CD8-positive, alpha-beta T cell (primary cell): ENCODE measurements at regions of chr10 and their contacts with region 1.

Region 1: GRCh38 chr10:14543046-14543903 is 212.6 kb upstream of the FRMD4A start:
- DNase-seq: peak in 6 of 9 experiments; percentile 47 to 82 (median 66)
- ATAC-seq: peak; percentile 84
- H3K4me3 ChIP-seq: peak overlapping the region; percentile 4 to 35
- H3K4me3 Mint-ChIP-seq: peak overlapping the region; percentile 75
- H3K27ac ChIP-seq: peak overlapping the region; percentile 68
- H3K27ac Mint-ChIP-seq: peak overlapping the region; percentile 95
- H3K4me1 ChIP-seq: peaks cover 62% of the 10 kb centered on the region
- H3K4me1 Mint-ChIP-seq: peaks cover 89% of the 10 kb centered on the region
- H3K27me3 ChIP-seq: no peaks in the 10 kb centered on the region
- H3K27me3 Mint-ChIP-seq: no peaks in the 10 kb centered on the region
- CTCF ChIP-seq: peak; percentile 76

Region 2: DNA sequence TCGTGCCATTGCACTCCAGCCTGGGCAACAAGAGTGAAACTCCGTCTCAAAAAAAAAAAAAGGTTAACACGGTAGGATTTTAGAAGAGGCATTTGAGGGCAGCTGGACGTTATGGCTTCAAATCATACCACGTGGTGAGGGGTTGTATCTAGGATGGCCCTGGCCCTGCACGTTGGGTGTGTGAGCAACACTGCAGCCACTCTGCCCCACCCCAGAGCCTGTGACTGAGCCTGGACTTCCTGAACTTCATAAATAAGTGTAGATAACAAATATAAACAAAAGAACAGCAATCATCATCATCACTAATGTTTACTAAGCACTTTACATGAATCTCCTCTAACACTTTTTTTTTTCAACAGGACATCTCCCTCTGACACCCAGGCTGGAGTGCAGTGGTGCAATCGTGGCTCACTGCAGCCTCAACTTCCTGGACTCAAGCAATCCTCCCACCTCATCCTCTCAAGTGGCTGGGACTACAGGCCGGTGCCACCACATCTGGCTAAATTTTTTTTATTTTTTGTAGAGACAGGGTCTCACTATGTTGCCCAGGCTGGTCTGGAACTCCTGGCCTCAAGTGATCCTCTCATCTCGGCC is 43.0 kb before region 1 on chr10:
- CTCF ChIA-PET with region 1: interaction called, 15 read pairs
- POLR2A ChIA-PET with region 1: no interaction called
- intact Hi-C with region 1: loop called (anchors 1 kb)
- DNase-seq: no peak
- ATAC-seq: no peak
- H3K4me3 ChIP-seq: no peak overlapping the region
- H3K4me3 Mint-ChIP-seq: no peak overlapping the region
- H3K27ac ChIP-seq: no peak overlapping the region
- H3K27ac Mint-ChIP-seq: no peak overlapping the region
- H3K4me1 ChIP-seq: peaks cover 9% of the 10 kb centered on the region
- H3K4me1 Mint-ChIP-seq: peaks cover 6% of the 10 kb centered on the region
- H3K27me3 ChIP-seq: no peaks in the 10 kb centered on the region
- H3K27me3 Mint-ChIP-seq: no peaks in the 10 kb centered on the region
- CTCF ChIP-seq: no peak

Region 3: DNA sequence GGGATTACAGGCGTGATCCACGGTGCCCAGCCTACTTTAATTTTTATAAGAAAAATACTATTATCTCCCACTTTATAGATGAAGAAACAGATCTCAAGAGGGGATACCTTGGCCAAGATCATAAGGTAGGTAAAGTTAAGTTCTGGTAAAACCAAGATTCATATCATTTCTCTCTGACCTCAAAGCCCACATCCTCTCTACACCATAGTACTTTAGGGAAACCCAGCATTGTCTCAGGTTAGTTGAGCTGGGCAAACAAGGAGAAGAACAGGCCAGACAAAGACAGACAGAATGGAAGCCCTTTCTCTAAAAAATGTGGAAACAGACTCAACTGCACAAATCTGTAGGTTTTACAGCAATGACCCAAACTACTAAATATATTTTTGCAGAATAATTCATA is 14.8 kb before region 1 on chr10:
- CTCF ChIA-PET with region 1: interaction called, 8 read pairs
- POLR2A ChIA-PET with region 1: interaction called, 6 read pairs
- intact Hi-C with region 1: loop called in 1 of 2 experiments (anchors 2 kb)
- DNase-seq: peak in 2 of 9 experiments; percentile 54 to 71
- ATAC-seq: peak; percentile 82
- H3K4me3 ChIP-seq: no peak overlapping the region
- H3K4me3 Mint-ChIP-seq: peak overlapping the region; percentile 49
- H3K27ac ChIP-seq: no peak overlapping the region
- H3K27ac Mint-ChIP-seq: peak overlapping the region; percentile 38
- H3K4me1 ChIP-seq: peaks cover 58% of the 10 kb centered on the region
- H3K4me1 Mint-ChIP-seq: peaks cover 85% of the 10 kb centered on the region
- H3K27me3 ChIP-seq: no peaks in the 10 kb centered on the region
- H3K27me3 Mint-ChIP-seq: no peaks in the 10 kb centered on the region
- CTCF ChIP-seq: no peak

Region 4: GRCh38 chr10:14583252-14583651 is 40.0 kb after region 1 on chr10:
- CTCF ChIA-PET with region 1: interaction called, 5 read pairs
- POLR2A ChIA-PET with region 1: interaction called, 4 read pairs
- intact Hi-C with region 1: loop called in 1 of 2 experiments (anchors 2 kb)
- DNase-seq: peak; percentile 65 to 94 (median 82)
- ATAC-seq: peak; percentile 74
- H3K4me3 ChIP-seq: peak overlapping the region in 1 of 2 experiments; percentile 6
- H3K4me3 Mint-ChIP-seq: peak overlapping the region; percentile 81
- H3K27ac ChIP-seq: peak overlapping the region; percentile 57 to 82
- H3K27ac Mint-ChIP-seq: peak overlapping the region; percentile 97
- H3K4me1 ChIP-seq: peaks cover 94% of the 10 kb centered on the region
- H3K4me1 Mint-ChIP-seq: peaks cover 92% of the 10 kb centered on the region
- H3K27me3 ChIP-seq: no peaks in the 10 kb centered on the region
- H3K27me3 Mint-ChIP-seq: no peaks in the 10 kb centered on the region
- CTCF ChIP-seq: no peak